ENCODE measurements at regions of chr7 and their contacts with region 1.

Region 1: DNA sequence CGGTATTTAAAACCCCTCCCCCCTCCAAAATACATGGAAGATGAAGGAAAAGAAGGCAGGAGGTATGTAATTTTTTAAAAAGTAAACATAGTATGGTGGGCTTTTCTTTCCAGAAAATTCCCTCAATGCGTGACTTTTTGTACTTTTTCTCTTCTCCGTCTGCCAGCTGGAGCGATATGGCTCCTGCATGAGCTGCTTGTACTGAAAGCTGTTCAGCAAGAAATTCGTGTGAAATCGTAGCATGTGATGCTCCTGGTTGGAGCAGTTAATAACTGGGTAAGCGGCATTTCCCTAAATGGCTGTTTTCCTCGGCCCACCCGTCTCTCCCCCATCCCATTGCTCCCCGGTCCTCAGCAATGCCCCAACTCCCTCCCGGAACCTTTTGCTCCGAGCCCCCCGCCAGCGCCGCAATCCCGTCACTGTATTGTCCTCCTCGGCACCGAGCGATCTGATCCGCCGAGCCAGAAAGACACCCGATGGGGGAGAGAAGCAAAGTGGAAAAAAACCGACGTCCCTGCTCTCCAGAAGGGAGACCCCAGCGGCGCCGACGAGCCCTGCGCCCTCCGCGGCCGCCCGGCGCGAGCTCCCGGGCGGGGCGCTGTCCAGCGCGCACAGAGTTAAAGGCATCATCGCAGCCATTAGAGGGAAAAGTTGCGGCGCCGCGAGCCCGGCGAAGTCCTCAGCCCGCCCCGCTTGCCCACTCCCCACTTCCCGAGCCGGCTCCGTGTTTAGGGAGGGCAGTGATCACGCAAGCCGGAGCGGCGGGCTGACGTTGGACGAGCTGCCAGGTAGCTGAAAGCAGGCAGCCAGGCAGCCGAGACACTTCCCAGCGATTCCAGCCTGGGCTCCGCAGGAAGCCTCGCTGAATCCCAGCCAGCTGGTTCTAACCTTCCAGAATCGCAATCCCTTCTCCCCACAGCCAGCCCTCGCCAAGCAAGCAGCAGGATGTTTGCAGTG is at the start of gene VSTM2A:
- DNase-seq: no peak
- ATAC-seq: 0 out of 3 replicates have a peak, but pooled peaks have one; percentile 49
- H3K4me3 ChIP-seq: no peak within 1 kb of the TSS
- H3K27ac ChIP-seq: no peak within 1 kb of the TSS
- H3K4me1 ChIP-seq: peaks cover 0 to 5% of the 10 kb centered on the region in 2 experiments; a peak in 2 of 5 replicates
- H3K27me3 ChIP-seq: 0 out of 5 replicates have a peak, but pooled peaks cover 0 to 2% of the 10 kb centered on the region in 2 experiments
- CTCF ChIP-seq: no peak
- EP300 ChIP-seq: no peak
- POLR2A ChIP-seq: no peak
- RAD21 ChIP-seq: no peak
- polyA plus RNA-seq, gene VSTM2A: not detected

Region 2: DNA sequence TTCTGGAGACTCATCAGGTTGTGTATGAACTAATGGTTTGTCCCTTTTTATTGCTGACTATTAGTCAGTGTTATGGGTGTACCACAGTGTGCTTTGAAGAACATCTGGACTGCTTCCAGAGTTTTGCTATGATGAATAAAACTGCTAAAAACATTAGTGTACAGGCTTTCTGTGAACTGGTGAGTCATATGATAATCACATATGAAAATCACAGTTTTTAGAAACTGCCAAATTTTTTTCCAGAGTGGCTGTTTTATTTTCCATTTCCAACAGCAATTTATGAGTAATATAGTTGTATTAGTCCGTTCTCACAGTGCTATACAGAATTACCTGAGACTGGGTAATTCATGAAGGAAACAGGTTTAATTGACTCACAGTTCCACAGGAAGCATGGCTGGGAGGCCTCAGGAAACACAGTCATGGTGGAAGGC is 281.0 kb before region 1 on chr7:
- CTCF ChIA-PET with region 1: no interaction called
- POLR2A ChIA-PET with region 1: no interaction called
- in situ Hi-C with region 1: no loop called
- intact Hi-C with region 1: no loop called
- DNase-seq: no peak
- ATAC-seq: no peak
- H3K4me3 ChIP-seq: no peak overlapping the region
- H3K27ac ChIP-seq: no peak overlapping the region
- H3K4me1 ChIP-seq: no peaks in the 10 kb centered on the region
- H3K27me3 ChIP-seq: no peaks in the 10 kb centered on the region
- CTCF ChIP-seq: no peak
- EP300 ChIP-seq: no peak
- POLR2A ChIP-seq: no peak
- RAD21 ChIP-seq: no peak

Region 3: GRCh38 chr7:54556121-54556520 is 14.2 kb after region 1 on chr7:
- CTCF ChIA-PET with region 1: no interaction called
- POLR2A ChIA-PET with region 1: no interaction called
- in situ Hi-C with region 1: no loop called
- intact Hi-C with region 1: no loop called
- DNase-seq: no peak
- ATAC-seq: no peak
- H3K4me3 ChIP-seq: no peak overlapping the region
- H3K27ac ChIP-seq: no peak overlapping the region
- H3K4me1 ChIP-seq: no peaks in the 10 kb centered on the region
- H3K27me3 ChIP-seq: no peaks in the 10 kb centered on the region
- CTCF ChIP-seq: no peak
- EP300 ChIP-seq: no peak
- POLR2A ChIP-seq: no peak
- RAD21 ChIP-seq: no peak

Region 4: GRCh38 chr7:54664235-54665228 is 122.6 kb after region 1 on chr7:
- CTCF ChIA-PET with region 1: no interaction called
- POLR2A ChIA-PET with region 1: no interaction called
- in situ Hi-C with region 1: loop called (anchors 5 kb)
- intact Hi-C with region 1: no loop called
- DNase-seq: peak; percentile 16 to 30 (median 19)
- ATAC-seq: peak; percentile 94
- H3K4me3 ChIP-seq: no peak overlapping the region
- H3K27ac ChIP-seq: no peak overlapping the region
- H3K4me1 ChIP-seq: peaks cover 0 to 8% of the 10 kb centered on the region in 2 experiments; a peak in 2 of 5 replicates
- H3K27me3 ChIP-seq: peaks cover 0 to 16% of the 10 kb centered on the region in 2 experiments; a peak in 3 of 5 replicates
- CTCF ChIP-seq: peak in 2 of 3 experiments; percentile 17 to 31; a peak in 2 of 6 replicates
- EP300 ChIP-seq: no peak
- POLR2A ChIP-seq: no peak
- RAD21 ChIP-seq: peak in 1 of 2 experiments; percentile 30; a peak in 1 of 4 replicates

Region 5: DNA sequence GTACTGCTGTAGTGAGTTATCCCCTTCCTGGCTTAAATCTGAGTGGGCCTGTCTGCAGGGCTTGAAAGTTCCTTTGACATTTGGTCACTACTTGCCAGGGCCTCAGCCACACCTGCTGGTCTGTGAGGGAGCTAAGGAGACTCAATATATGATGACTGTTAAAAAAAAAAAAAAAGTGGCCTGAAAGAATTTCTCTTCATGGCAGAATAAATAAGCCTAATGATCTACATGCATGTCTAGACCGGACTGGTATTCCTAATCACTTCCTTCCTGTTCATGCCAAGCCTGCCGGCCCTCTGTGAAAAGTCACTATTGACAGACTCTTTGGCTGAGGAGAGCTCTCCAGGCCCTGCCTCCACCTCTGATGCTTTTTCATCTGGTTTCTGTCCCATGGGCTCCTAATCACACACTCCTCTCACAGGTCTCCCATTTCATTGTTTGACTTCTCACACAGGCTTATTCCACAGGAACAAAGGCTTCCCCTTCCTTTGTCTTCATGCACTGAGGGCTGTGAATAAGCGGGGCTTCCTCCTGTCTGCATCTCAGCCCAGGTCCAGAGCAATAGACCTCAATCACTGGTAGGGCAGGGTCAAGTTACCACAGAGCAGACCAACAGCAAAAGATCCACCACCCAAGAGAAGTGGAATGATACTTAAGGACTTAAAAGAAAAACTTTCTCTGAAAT is 316.2 kb after region 1 on chr7:
- CTCF ChIA-PET with region 1: no interaction called
- POLR2A ChIA-PET with region 1: no interaction called
- in situ Hi-C with region 1: no loop called
- intact Hi-C with region 1: no loop called
- DNase-seq: no peak
- ATAC-seq: no peak
- H3K4me3 ChIP-seq: no peak overlapping the region
- H3K27ac ChIP-seq: no peak overlapping the region
- H3K4me1 ChIP-seq: no peaks in the 10 kb centered on the region
- H3K27me3 ChIP-seq: peaks cover 0 to 3% of the 10 kb centered on the region in 2 experiments; a peak in 1 of 5 replicates
- CTCF ChIP-seq: no peak
- EP300 ChIP-seq: no peak
- POLR2A ChIP-seq: no peak
- RAD21 ChIP-seq: no peak